ENCODE measurements at regions of chr12 and their contacts with region 1.

Region 1: DNA sequence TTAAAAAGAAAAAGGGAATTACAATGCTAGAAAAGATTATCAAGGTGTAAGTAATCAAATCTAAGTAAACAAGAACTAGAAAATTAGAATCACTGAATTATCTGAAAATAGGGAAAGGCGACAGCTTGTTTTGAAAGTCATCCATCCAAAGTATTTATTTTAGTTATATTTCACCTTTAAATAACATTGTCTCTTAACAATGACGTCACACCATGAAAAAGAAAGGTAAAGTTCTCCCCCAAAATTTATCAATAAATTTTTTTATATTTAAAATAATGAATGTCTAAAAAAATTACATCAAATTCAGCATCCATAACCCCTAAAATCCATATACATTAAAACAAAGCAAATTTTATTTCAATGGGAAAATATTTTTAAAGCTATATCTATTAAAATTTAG is 223.2 kb downstream of the RERGL start:
- DNase-seq: no peak
- ATAC-seq: no peak

Region 2: DNA sequence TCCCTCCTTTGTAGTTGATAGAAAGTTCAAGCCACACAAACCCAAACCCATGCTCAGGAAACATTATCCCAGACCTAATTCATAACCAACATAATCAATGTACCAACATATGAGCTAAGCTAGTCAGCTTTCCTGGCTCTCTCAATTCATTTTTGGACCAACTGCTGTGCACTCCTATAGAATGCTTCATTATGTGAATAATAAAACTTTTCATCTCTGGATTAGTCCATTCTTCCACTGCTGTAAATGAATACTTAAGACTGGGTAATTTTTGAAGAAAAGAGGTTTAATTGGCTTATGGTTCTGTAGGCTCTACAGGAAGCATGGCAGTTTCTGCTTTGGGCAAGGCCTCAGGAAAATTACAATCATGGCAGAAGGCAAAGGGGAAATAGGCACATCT is 428.7 kb before region 1 on chr12:
- intact Hi-C with region 1: no loop called
- DNase-seq: no peak
- ATAC-seq: no peak

Region 3: GRCh38 chr12:17778242-17778641 is 88.6 kb before region 1 on chr12:
- intact Hi-C with region 1: loop called (anchors 5 to 10 kb)
- DNase-seq: no peak
- ATAC-seq: no peak